Caco-2 (cell line): ENCODE measurements at regions of chr20 and their contacts with region 1.

Region 1: GRCh38 chr20:13610184-13610583 is 28.5 kb downstream of the TASP1 start:
- DNase-seq: peak in 1 of 2 experiments; percentile 37
- H3K4me3 ChIP-seq: no peak overlapping the region
- H3K4me3 Mint-ChIP-seq: no peak overlapping the region
- H3K27ac Mint-ChIP-seq: no peak overlapping the region
- H3K4me1 ChIP-seq: no peaks in the 10 kb centered on the region; the same call in 1 of the 2 replicates
- H3K4me1 Mint-ChIP-seq: no peaks in the 10 kb centered on the region
- H3K27me3 ChIP-seq: no peaks in the 10 kb centered on the region
- H3K27me3 Mint-ChIP-seq: no peaks in the 10 kb centered on the region
- CTCF ChIP-seq: peak; percentile 31 to 35

Region 2: DNA sequence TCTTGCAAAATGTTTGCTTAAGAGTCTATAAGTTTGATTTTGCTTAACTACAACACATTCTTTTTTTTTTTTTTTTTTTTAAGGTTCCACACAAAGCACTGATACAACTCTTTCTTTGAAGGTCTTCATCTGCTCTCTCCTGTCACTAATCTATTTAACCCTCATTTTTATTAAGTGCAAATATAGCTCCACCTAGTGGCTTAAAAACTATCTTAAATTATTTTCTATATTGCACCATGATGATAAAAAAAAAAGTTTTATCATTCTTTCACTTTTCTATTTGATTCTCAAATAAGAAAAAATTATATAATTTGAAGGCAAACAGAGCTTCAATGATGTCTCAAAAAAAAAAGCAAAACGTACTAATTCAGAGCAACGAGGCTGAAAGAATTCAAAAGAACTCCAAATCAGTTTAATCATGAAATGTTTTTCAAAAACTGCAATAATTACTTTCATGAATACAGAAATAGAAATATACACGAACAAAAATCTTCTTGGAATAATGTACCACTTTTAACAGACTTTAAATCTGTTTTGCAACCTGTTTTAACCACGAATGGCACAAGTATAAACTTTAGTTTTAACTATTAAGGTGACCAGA is 161.8 kb after region 1 on chr20:
- CTCF ChIA-PET with region 1: no interaction called
- POLR2A ChIA-PET with region 1: no interaction called
- intact Hi-C with region 1: loop called (anchors 1 kb)
- DNase-seq: no peak
- H3K4me3 ChIP-seq: no peak overlapping the region
- H3K4me3 Mint-ChIP-seq: no peak overlapping the region
- H3K27ac Mint-ChIP-seq: no peak overlapping the region
- H3K4me1 ChIP-seq: no peaks in the 10 kb centered on the region; the same call in 1 of the 2 replicates
- H3K4me1 Mint-ChIP-seq: no peaks in the 10 kb centered on the region
- H3K27me3 ChIP-seq: no peaks in the 10 kb centered on the region
- H3K27me3 Mint-ChIP-seq: no peaks in the 10 kb centered on the region
- CTCF ChIP-seq: peak in 1 of 2 experiments; percentile 60

Region 3: GRCh38 chr20:13784893-13785715 is 174.9 kb after region 1 on chr20 and contains the starts of genes ESF1 and NDUFAF5:
- CTCF ChIA-PET with region 1: interaction called, 9 read pairs
- POLR2A ChIA-PET with region 1: no interaction called
- intact Hi-C with region 1: loop called (anchors 5 kb)
- DNase-seq: peak; percentile 95 to 98
- H3K4me3 ChIP-seq: peak within 1 kb of the TSS; percentile 83
- H3K4me3 Mint-ChIP-seq: peak within 1 kb of the TSS; percentile 93
- H3K27ac Mint-ChIP-seq: peak within 1 kb of the TSS; percentile 98
- H3K4me1 ChIP-seq: peaks cover 12% of the 10 kb centered on the region; the same call in 1 of the 2 replicates
- H3K4me1 Mint-ChIP-seq: peaks cover 14% of the 10 kb centered on the region
- H3K27me3 ChIP-seq: no peaks in the 10 kb centered on the region
- H3K27me3 Mint-ChIP-seq: no peaks in the 10 kb centered on the region
- CTCF ChIP-seq: no peak
- total RNA-seq, gene ESF1: 21.3 and 22.7 TPM in 2 replicates
- total RNA-seq, gene NDUFAF5: 34.9 and 38.3 TPM in 2 replicates